ENCODE measurements at regions of chr1 and their contacts with region 1.

Region 1: GRCh38 chr1:93078986-93079654 is at the start of gene MTF2:
- DNase-seq: peak; percentile 91
- CTCF ChIP-seq: no peak

Region 2: DNA sequence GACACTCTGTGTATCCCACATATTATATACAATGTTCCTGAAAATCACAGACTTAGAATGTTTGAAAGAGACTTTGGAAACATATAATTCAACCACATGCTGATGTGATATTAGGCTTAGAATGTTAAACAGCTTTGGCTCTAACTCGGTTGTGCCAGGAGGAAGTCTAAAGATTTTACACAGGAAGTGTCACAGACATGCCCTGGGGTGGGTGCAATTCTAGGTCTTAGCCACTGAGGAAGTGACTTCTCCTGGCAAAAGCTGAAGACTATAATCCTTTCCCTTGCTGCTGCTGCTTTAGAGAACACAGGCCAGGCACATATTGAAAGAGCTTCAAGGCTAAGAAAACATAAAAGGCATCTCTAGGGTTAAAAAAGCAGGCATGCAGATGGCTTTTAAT is 196.3 kb before region 1 on chr1:
- CTCF ChIA-PET with region 1: no interaction called
- POLR2A ChIA-PET with region 1: no interaction called
- DNase-seq: no peak
- CTCF ChIP-seq: no peak

Region 3: GRCh38 chr1:93093332-93094006 is 14.3 kb after region 1 on chr1:
- CTCF ChIA-PET with region 1: interaction called, 33 read pairs
- POLR2A ChIA-PET with region 1: interaction called, 7 read pairs
- DNase-seq: no peak
- CTCF ChIP-seq: no peak

Region 4: GRCh38 chr1:93607814-93608186 is 528.7 kb after region 1 on chr1:
- CTCF ChIA-PET with region 1: no interaction called
- POLR2A ChIA-PET with region 1: interaction called, 10 read pairs
- DNase-seq: peak; percentile 84
- CTCF ChIP-seq: no peak

Measured in GM10248 (cell line).